PC-3 (cell line): ENCODE measurements at regions of chr18 and their contacts with region 1.

Region 1: GRCh38 chr18:75784398-75784789 is 356.9 kb upstream of the SMIM21 start:
- DNase-seq: no peak
- ATAC-seq: no peak
- H3K4me3 ChIP-seq: no peak overlapping the region
- H3K27ac ChIP-seq: no peak overlapping the region
- H3K4me1 ChIP-seq: no peaks in the 10 kb centered on the region
- H3K27me3 ChIP-seq: peaks cover 95% of the 10 kb centered on the region
- CTCF ChIP-seq: no peak

Region 2: DNA sequence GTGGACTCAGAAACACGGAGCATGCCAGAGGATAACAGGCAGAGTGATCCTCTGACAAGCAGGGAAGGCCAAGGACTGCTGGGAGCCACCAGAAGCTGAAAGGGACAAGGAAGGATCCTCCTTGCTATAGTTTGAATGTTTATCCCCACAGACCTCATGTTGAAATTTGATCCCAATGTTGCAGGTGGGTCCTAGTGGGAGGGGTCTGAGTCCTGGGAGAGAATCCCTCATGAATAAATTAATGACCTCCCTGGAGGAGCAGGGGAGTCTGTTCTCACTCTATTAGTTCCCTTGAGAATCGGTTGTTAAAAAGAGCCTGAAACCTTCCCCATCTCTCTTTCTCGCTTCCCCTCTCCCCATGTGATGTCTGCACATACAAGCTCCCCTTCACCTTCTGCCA is 1761.2 kb before region 1 on chr18:
- CTCF ChIA-PET with region 1: no interaction called
- POLR2A ChIA-PET with region 1: no interaction called
- intact Hi-C with region 1: no loop called
- DNase-seq: no peak
- ATAC-seq: no peak
- H3K4me3 ChIP-seq: no peak overlapping the region
- H3K27ac ChIP-seq: no peak overlapping the region
- H3K4me1 ChIP-seq: no peaks in the 10 kb centered on the region
- H3K27me3 ChIP-seq: peaks cover 52% of the 10 kb centered on the region
- CTCF ChIP-seq: no peak

Region 3: GRCh38 chr18:75492852-75493251 is 291.5 kb before region 1 on chr18:
- CTCF ChIA-PET with region 1: no interaction called
- POLR2A ChIA-PET with region 1: interaction called, 23 read pairs
- intact Hi-C with region 1: no loop called
- DNase-seq: no peak
- ATAC-seq: no peak
- H3K4me3 ChIP-seq: no peak overlapping the region
- H3K27ac ChIP-seq: no peak overlapping the region
- H3K4me1 ChIP-seq: peaks cover 25% of the 10 kb centered on the region
- H3K27me3 ChIP-seq: peaks cover 26% of the 10 kb centered on the region
- CTCF ChIP-seq: no peak

Region 4: GRCh38 chr18:75687626-75688025 is 96.8 kb before region 1 on chr18:
- CTCF ChIA-PET with region 1: no interaction called
- POLR2A ChIA-PET with region 1: no interaction called
- intact Hi-C with region 1: no loop called
- DNase-seq: peak; percentile 4
- ATAC-seq: no peak
- H3K4me3 ChIP-seq: no peak overlapping the region
- H3K27ac ChIP-seq: no peak overlapping the region
- H3K4me1 ChIP-seq: no peaks in the 10 kb centered on the region
- H3K27me3 ChIP-seq: peaks cover 76% of the 10 kb centered on the region
- CTCF ChIP-seq: no peak

Region 5: GRCh38 chr18:75823471-75823870 is 39.1 kb after region 1 on chr18:
- CTCF ChIA-PET with region 1: no interaction called
- POLR2A ChIA-PET with region 1: no interaction called
- intact Hi-C with region 1: no loop called
- DNase-seq: no peak
- ATAC-seq: no peak
- H3K4me3 ChIP-seq: no peak overlapping the region
- H3K27ac ChIP-seq: no peak overlapping the region
- H3K4me1 ChIP-seq: no peaks in the 10 kb centered on the region
- H3K27me3 ChIP-seq: peaks cover 6% of the 10 kb centered on the region; the same call in 1 of the 2 replicates
- CTCF ChIP-seq: no peak